IMR-90 (cell line): ENCODE measurements at regions of chr1 and their contacts with region 1.

Region 1: DNA sequence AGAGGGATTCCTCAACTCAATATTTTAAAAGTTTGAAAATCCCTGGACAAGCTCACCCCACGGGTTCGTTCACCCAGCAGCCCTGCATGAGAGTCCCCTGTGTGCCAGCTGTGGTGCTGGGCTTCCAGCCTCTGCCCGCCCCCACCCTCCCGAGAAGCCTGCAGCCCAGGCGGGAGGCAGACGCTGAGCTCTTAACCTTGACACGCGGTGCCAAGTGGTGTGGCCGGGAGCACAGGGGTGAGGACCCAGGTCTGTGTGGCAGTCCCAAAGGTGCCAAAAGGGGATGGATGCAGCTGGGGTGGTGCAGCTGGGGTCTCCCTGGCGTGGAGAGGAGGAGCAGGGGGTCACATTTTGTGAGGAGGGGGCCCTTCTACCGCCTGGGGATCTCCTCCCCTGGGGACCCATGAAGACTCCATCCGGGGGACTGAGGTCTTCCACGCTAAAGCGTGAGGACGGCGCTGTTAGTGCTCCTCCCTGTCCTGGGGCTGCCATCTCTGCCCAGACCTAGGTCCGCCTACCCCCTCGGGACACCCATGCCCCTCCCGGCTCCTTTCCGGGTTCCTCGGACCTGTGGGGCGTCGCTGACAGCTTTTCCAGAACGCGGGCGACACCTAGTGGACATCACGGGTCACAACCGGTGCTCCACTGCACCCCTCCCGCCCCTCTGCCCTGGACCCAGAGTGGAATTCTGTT is 12.9 kb downstream of the PLA2G2F start:
- DNase-seq: peak; percentile 41
- ATAC-seq: peak; percentile 99
- H3K4me3 ChIP-seq: 0 out of 2 replicates have a peak overlapping the region, but pooled peaks have one; percentile 8
- H3K27ac ChIP-seq: no peak overlapping the region
- H3K4me1 ChIP-seq: peaks cover 3% of the 10 kb centered on the region; the same call in 1 of the 2 replicates
- H3K27me3 ChIP-seq: peaks cover 5% of the 10 kb centered on the region
- CTCF ChIP-seq: peak; percentile 90
- POLR2A ChIP-seq: no peak; the same call in 1 of the 2 replicates
- RAD21 ChIP-seq: peak; percentile 92

Region 2: GRCh38 chr1:19232526-19232851 is 919.6 kb before region 1 on chr1:
- CTCF ChIA-PET with region 1: no interaction called
- POLR2A ChIA-PET with region 1: no interaction called
- dilution Hi-C with region 1: no loop called
- in situ Hi-C with region 1: no loop called
- intact Hi-C with region 1: no loop called
- DNase-seq: peak; percentile 68
- ATAC-seq: peak; percentile 89
- H3K4me3 ChIP-seq: no peak overlapping the region
- H3K27ac ChIP-seq: no peak overlapping the region; the same call in 1 of the 2 replicates
- H3K4me1 ChIP-seq: peaks cover 11% of the 10 kb centered on the region; the same call in 1 of the 2 replicates
- H3K27me3 ChIP-seq: no peaks in the 10 kb centered on the region
- CTCF ChIP-seq: no peak; the same call in 1 of the 2 replicates
- POLR2A ChIP-seq: no peak
- RAD21 ChIP-seq: peak; percentile 11; the same call in 1 of the 2 replicates

Region 3: DNA sequence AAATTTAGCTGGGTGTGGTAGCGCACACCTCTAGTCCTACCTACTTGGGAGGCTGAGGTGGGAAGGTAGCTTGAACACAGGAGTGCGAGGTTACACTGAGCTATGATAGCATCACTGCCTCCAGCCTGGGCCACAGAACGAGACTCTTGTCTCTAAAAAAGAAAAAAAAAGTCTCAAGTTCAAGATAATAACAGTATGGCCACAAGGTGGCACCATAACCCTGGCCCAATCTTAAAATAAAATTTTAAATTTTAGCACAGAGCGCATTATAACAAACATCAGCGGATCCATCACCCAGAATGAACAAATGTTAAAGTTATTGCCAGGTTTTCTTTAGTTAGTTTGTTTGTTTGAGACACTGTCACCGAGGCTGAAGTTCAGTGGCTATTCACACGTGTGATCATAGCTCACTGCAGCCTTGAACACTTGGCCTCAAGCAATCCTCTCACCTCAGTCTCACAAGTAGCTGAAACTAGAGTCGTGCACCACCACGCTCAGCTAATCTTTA is 490.3 kb before region 1 on chr1:
- CTCF ChIA-PET with region 1: interaction called, 3 read pairs
- POLR2A ChIA-PET with region 1: no interaction called
- dilution Hi-C with region 1: no loop called
- in situ Hi-C with region 1: no loop called
- intact Hi-C with region 1: loop called (anchors 5 kb)
- DNase-seq: peak; percentile 52
- ATAC-seq: no peak
- H3K4me3 ChIP-seq: no peak overlapping the region
- H3K27ac ChIP-seq: no peak overlapping the region
- H3K4me1 ChIP-seq: peaks cover 1% of the 10 kb centered on the region; the same call in 1 of the 2 replicates
- H3K27me3 ChIP-seq: peaks cover 37% of the 10 kb centered on the region
- CTCF ChIP-seq: peak; percentile 75
- POLR2A ChIP-seq: no peak
- RAD21 ChIP-seq: peak; percentile 77

Region 4: DNA sequence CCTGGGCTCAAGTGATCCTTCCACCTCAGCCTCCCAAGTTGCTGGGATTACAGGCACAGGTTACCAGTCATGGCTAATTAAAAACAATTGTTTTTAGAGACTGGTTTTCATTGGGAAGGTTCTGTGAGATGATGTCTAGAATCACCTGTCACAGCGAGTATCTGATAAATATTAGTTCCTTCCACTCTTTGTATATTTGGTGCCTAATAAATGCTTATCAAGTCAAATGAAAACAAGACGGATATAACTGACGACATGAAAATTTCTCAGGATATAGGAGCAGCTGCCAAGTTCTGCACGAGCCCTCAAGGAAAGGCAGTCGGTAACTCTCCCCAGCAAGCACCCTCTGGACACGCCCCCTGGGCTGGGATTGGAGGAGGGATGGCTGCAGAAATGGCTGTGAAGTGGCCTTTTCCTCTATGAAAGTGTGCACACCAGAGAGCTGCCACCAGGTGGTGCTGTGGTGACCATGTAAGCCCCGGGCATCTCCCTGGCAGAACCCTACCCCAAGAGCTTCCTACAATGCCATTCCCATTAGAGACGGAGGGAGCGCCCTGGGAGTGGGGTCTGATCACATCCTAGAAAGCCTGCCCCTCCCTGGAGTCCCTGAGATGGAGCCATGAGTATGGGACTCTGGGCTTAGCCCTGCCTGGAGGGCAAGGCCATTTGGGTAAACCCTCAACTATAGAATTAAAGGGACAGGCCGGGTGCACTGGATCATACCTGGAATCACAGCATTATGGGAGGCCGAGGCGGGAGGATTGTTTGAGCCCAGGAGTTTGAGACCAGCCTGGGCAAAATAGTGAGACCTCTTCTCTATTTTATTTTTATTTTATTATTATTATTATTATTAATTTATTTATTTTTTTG is 436.5 kb before region 1 on chr1:
- CTCF ChIA-PET with region 1: no interaction called
- POLR2A ChIA-PET with region 1: no interaction called
- dilution Hi-C with region 1: no loop called
- in situ Hi-C with region 1: no loop called
- intact Hi-C with region 1: loop called (anchors 5 kb)
- DNase-seq: peak; percentile 93
- ATAC-seq: peak; percentile 100
- H3K4me3 ChIP-seq: no peak overlapping the region
- H3K27ac ChIP-seq: no peak overlapping the region
- H3K4me1 ChIP-seq: no peaks in the 10 kb centered on the region
- H3K27me3 ChIP-seq: no peaks in the 10 kb centered on the region
- CTCF ChIP-seq: peak; percentile 95
- POLR2A ChIP-seq: no peak
- RAD21 ChIP-seq: peak; percentile 81

Region 5: DNA sequence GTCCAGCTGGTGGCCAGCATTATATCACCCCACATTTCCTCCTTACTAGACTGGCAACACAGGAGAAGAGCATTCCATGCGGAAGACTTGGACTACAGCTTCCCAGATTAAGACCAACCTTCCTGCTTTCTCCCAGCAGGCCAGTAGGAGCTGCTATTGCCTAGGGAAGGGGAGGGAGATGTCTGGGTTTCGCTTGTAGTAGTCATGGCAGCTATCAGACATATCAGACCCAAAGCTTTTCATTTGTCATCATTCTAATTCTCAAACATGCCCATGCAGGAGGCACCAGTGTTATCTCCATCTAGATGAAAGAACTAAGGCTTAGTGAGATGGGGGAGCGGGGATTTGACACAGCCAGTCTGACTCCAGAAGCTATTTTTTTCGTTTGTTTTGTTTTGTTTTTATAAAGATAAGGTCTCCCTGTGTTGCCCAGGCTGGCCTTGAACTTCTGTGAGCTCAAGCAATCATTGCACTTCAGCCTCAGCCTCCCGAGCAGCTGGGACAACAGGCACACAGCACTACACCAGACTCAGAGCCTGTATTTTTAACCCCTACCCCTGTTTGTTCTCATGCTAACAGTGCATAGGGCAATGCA is 177.1 kb before region 1 on chr1:
- CTCF ChIA-PET with region 1: interaction called, 5 read pairs
- POLR2A ChIA-PET with region 1: no interaction called
- dilution Hi-C with region 1: no loop called
- in situ Hi-C with region 1: no loop called
- intact Hi-C with region 1: loop called (anchors 1 kb)
- DNase-seq: peak; percentile 72
- ATAC-seq: peak; percentile 92
- H3K4me3 ChIP-seq: no peak overlapping the region
- H3K27ac ChIP-seq: no peak overlapping the region
- H3K4me1 ChIP-seq: no peaks in the 10 kb centered on the region
- H3K27me3 ChIP-seq: peaks cover 27% of the 10 kb centered on the region
- CTCF ChIP-seq: peak; percentile 84
- POLR2A ChIP-seq: no peak
- RAD21 ChIP-seq: peak; percentile 88

Region 6: DNA sequence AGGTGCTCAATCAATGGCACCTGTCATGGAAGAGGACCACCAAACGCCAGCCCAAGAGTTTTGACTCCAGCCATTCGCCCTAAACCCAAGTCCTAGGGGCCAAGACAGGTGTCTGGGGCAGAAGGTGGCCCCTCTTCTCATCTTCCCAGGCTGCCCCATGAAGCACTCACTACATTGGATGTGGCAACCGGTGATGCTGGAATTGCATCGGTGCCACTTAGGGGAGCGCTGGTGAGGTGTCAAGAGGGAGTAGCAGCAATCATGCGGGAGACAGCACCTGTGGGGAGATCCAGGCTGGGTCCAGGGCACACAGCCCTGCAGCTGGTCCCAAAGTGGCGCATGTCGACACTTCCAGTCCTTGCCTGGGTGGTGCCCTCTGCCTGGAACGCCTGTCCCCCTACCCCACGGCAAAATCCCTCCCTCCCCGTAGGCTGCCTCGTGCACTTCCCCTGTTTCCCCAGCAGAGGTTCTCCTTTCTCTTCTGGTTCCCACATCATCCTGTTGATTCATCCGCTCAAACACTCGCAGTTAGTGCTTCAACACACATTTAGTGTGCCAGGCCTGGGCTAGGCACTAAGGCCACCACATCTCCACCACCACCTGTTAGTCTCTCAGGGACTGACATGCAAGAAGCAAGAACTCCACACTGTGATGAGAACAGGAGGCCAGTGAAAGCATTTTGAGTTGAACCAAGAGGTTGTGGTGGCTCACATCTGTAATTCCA is 51.3 kb before region 1 on chr1:
- CTCF ChIA-PET with region 1: interaction called, 14 read pairs
- POLR2A ChIA-PET with region 1: no interaction called
- dilution Hi-C with region 1: no loop called
- in situ Hi-C with region 1: no loop called
- intact Hi-C with region 1: loop called (anchors 1 kb)
- DNase-seq: peak; percentile 48
- ATAC-seq: peak; percentile 95
- H3K4me3 ChIP-seq: no peak overlapping the region
- H3K27ac ChIP-seq: no peak overlapping the region
- H3K4me1 ChIP-seq: peaks cover 3% of the 10 kb centered on the region
- H3K27me3 ChIP-seq: peaks cover 22% of the 10 kb centered on the region
- CTCF ChIP-seq: peak; percentile 54
- POLR2A ChIP-seq: no peak
- RAD21 ChIP-seq: peak; percentile 59

Region 7: GRCh38 chr1:20194757-20195461 is 42.9 kb after region 1 on chr1:
- CTCF ChIA-PET with region 1: no interaction called
- POLR2A ChIA-PET with region 1: interaction called, 11 read pairs
- dilution Hi-C with region 1: no loop called
- in situ Hi-C with region 1: no loop called
- intact Hi-C with region 1: no loop called
- DNase-seq: peak; percentile 36
- ATAC-seq: peak; percentile 75
- H3K4me3 ChIP-seq: no peak overlapping the region
- H3K27ac ChIP-seq: no peak overlapping the region
- H3K4me1 ChIP-seq: no peaks in the 10 kb centered on the region
- H3K27me3 ChIP-seq: peaks cover 35% of the 10 kb centered on the region
- CTCF ChIP-seq: peak; percentile 59
- POLR2A ChIP-seq: no peak
- RAD21 ChIP-seq: peak; percentile 48